HEK293 (cell line): ENCODE measurements at regions of chr19 and their contacts with region 1.

Region 1: DNA sequence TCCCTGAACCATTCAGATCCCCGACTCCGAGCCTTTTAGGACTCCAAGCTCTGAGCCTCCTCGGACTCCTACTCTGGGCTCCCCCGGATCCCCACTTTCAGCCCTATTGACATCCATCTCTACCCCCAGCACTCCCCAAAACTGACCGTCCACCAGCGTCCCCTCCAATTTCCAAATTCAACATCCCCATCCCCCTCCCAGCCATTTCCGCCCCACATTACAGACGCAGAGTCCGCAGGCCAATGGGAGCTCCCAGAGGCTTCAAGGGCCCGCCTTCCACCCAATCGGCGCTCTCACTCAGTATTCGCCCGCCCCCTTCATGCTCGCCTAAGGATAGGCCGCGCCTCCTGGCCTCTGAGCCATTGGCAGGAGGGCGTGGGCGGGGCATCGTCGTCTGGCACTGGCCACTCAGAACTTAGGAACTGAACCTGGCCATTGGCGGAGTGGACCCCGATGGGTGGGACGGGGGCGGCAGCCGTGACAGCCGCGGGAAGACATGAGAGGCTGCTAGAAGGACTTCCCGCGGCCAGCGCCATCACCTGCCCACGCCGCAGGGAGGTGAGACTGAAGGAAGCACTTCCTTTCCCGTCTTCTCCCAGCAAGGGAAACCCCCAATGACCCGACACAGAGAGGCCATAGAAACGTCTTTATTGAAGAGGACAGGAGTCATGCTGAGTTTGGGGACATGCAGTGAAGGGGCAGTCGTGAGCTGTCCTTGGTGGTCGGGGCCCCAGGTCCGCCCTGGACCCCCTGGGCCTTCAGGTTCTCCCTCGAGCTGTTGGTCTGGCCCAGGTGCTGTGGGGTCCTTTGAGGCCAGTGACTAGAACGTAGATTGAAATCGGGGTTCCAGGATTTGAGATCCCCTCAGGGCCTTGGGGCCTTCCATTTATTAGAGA is at the start of gene ALKBH6:
- H3K4me3 ChIP-seq: peak within 1 kb of the TSS; percentile 61
- H3K27ac ChIP-seq: peak within 1 kb of the TSS; percentile 75
- H3K4me1 ChIP-seq: peaks cover 22% of the 10 kb centered on the region
- CTCF ChIP-seq: peak; percentile 81

Region 2: GRCh38 chr19:35790981-35791813 is 223.1 kb before region 1 on chr19:
- CTCF ChIA-PET with region 1: no interaction called
- POLR2A ChIA-PET with region 1: no interaction called
- H3K4me3 ChIP-seq: no peak overlapping the region
- H3K27ac ChIP-seq: peak overlapping the region; percentile 31
- H3K4me1 ChIP-seq: no peaks in the 10 kb centered on the region
- CTCF ChIP-seq: peak; percentile 83

Region 3: DNA sequence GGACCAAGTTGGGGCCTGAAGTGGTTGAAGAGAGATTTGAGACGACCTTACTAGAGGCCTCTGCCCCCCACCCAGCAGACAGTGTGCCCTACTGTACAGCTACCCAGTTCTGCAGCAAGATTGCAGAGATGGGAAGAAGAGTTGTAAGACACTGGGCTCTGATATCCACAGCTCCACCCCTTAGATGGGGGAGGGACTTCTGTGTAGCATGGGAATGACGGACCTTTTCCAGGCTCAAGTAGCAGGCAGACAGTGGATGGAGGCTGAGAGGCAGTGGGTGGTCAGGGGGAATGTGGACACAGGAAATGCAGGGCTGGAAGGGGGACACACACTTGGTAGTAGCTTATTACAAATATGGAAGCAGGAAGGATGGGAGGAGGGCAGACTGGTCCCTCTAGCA is 65.1 kb before region 1 on chr19:
- CTCF ChIA-PET with region 1: interaction called, 11 read pairs
- POLR2A ChIA-PET with region 1: no interaction called
- H3K4me3 ChIP-seq: no peak overlapping the region
- H3K27ac ChIP-seq: no peak overlapping the region
- H3K4me1 ChIP-seq: no peaks in the 10 kb centered on the region
- CTCF ChIP-seq: no peak

Region 4: DNA sequence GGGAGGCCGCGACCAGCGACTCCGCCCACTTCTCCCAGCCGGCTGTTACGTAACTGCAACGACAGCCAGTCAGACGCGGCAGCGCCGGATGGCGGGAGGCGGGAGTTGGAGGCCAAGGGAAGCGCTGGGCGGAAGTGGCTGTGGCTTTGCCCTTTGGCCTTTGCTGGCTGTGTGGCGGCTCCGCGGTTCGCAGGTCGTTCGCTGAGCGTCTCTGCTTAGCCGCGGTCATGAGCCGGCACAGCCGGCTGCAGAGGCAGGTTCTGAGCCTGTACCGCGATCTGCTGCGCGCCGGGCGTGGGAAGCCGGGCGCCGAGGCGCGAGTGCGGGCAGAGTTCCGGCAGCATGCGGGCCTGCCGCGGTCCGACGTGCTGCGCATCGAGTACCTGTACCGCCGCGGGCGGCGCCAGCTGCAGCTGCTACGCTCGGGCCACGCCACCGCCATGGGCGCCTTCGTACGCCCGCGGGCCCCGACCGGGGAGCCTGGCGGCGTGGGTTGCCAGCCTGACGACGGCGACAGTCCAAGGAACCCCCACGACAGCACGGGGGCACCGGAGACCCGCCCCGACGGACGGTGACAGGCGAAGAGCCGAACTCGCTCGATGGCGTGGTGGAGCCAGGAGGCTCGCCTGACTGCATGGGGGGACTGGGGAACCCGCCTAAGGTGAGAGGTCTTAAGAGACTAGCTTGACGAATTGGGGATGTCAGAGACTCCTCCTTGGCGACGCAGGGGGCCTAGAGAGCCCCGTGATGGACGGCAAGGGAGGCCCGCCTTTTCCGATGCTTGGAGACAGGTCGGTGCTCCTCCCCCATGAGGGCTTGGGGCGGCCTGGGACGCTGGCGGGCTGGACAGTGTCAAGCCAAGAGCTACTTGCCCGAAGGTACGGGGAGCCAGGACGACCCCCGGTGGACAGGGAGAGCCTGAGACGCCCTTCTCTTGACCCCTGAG is 19.0 kb before region 1 on chr19 and contains the start of gene SDHAF1:
- CTCF ChIA-PET with region 1: interaction called, 10 read pairs
- POLR2A ChIA-PET with region 1: interaction called, 37 read pairs
- H3K4me3 ChIP-seq: peak within 1 kb of the TSS; percentile 47
- H3K27ac ChIP-seq: peak within 1 kb of the TSS; percentile 84
- H3K4me1 ChIP-seq: peaks cover 21% of the 10 kb centered on the region
- CTCF ChIP-seq: no peak; the same call in 1 of the 2 replicates

Region 5: DNA sequence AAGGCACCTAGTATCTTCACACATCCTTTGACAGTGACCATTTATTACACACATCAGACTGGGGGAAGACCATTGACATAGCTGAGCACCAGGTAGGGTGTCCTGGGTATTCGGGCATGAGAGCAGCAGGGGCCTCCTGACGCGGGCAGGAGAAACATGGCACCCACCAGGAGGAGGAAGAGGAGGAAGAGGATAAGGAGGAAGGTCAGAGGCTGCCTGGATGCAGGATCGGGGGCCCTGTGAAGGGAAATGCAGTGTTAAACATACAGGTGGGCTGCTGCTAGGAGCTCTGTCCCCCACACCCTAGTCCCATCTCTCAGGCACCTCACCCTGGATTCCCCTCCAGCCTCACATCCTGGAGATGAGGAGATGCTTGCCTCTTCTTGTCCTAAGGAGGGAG is 11.0 kb before region 1 on chr19:
- CTCF ChIA-PET with region 1: interaction called, 10 read pairs
- POLR2A ChIA-PET with region 1: interaction called, 37 read pairs
- H3K4me3 ChIP-seq: no peak overlapping the region
- H3K27ac ChIP-seq: no peak overlapping the region
- H3K4me1 ChIP-seq: peaks cover 6% of the 10 kb centered on the region; the same call in 1 of the 2 replicates
- CTCF ChIP-seq: no peak

Region 6: GRCh38 chr19:36030264-36031148 is 16.2 kb after region 1 on chr19:
- CTCF ChIA-PET with region 1: interaction called, 7 read pairs
- POLR2A ChIA-PET with region 1: interaction called, 13 read pairs
- H3K4me3 ChIP-seq: no peak overlapping the region
- H3K27ac ChIP-seq: no peak overlapping the region
- H3K4me1 ChIP-seq: peaks cover 6% of the 10 kb centered on the region; the same call in 1 of the 2 replicates
- CTCF ChIP-seq: peak; percentile 58; the same call in 1 of the 2 replicates

Region 7: DNA sequence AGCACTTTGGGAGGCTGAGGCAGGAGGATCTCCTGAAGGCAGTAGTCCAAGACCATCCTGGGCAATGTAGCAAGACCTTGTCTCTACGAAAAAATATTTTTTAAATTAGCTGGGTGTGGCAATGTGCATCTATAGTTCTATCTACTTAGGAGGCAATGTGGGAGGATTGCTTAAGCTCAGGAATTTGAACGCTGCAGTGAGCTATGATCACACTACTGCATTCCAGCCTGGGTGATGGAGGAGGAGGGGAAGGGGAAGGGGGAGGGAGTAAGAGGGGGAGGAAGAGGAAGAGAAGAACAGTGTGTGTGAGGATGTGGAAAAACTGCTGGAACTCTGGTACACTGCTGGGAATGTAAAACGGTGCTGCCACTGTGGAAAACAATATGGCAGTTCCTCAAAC is 27.6 kb after region 1 on chr19:
- CTCF ChIA-PET with region 1: no interaction called
- POLR2A ChIA-PET with region 1: interaction called, 11 read pairs
- H3K4me3 ChIP-seq: no peak overlapping the region
- H3K27ac ChIP-seq: no peak overlapping the region
- H3K4me1 ChIP-seq: peaks cover 2% of the 10 kb centered on the region; the same call in 1 of the 2 replicates
- CTCF ChIP-seq: no peak